ENCODE measurements at regions of chr5 and their contacts with region 1.

Region 1: DNA sequence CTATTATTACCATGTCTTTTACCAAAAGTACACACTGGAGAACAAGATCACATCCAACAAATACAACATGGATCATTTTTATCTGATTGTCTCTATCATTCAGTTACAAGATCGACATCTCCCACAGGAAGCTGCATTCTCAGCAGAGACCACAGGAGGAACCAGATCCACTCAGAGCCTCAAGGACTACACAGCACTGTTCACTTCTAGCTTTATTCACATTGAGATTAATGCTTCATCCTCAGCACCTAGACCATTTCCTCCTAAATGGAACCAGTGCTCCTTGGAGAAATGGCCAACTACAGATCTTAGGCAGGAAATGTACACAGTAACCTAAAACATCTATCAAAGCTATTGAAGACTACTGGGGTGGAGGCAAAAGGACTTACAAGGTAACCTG is 13.3 kb upstream of the C5orf15 start:
- DNase-seq: no peak
- ATAC-seq: peak; percentile 37
- H3K4me3 Mint-ChIP-seq: no peak overlapping the region
- H3K27ac Mint-ChIP-seq: peak overlapping the region; percentile 52
- H3K4me1 Mint-ChIP-seq: peaks cover 26% of the 10 kb centered on the region
- H3K27me3 Mint-ChIP-seq: no peaks in the 10 kb centered on the region

Region 2: GRCh38 chr5:133996683-133997252 is 15.1 kb after region 1 on chr5:
- CTCF ChIA-PET with region 1: interaction called, 21 read pairs
- POLR2A ChIA-PET with region 1: no interaction called
- intact Hi-C with region 1: no loop called
- DNase-seq: peak; percentile 29
- ATAC-seq: no peak
- H3K4me3 Mint-ChIP-seq: no peak overlapping the region
- H3K27ac Mint-ChIP-seq: no peak overlapping the region
- H3K4me1 Mint-ChIP-seq: peaks cover 63% of the 10 kb centered on the region
- H3K27me3 Mint-ChIP-seq: no peaks in the 10 kb centered on the region

Region 3: DNA sequence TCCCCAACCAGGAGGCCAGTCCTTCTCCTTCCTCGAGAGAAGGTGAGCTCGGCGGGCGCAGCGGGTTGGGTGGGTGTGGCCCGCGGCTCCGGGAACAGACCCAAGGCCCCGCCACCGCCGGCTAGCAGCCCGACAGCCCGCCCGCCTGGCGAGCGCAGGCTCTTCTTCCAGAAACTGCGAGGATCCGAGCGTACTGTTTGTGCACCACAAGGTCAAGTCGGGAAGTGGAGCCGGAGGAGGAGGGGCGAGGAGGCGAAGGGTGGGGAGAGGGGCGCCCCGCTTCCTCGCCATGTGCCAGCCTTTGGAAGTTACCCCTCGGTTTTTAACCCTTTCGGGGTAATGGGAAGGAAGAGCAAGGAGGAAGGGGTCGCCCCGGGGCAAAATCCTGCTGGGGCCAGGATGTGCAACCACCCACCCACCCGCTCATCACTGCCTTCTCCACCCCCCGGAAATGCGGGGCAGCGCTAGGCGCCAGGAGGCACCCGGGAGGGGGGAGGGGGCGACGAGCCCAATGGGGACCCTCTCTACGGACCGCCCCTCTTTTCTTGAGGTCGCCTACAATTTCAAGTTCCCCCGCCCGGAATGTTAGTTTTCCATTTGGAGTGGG is 542.6 kb after region 1 on chr5:
- CTCF ChIA-PET with region 1: no interaction called
- POLR2A ChIA-PET with region 1: no interaction called
- intact Hi-C with region 1: no loop called
- DNase-seq: peak; percentile 82
- ATAC-seq: peak; percentile 14
- H3K4me3 Mint-ChIP-seq: peak overlapping the region; percentile 99
- H3K27ac Mint-ChIP-seq: peak overlapping the region; percentile 98
- H3K4me1 Mint-ChIP-seq: peaks cover 25% of the 10 kb centered on the region
- H3K27me3 Mint-ChIP-seq: peaks cover 2% of the 10 kb centered on the region

Measured in activated CD4-positive, alpha-beta T cell treated with anti-CD3 and anti-CD28 coated beads for 36 hours (primary cell).